Sigmoid colon (tissue), 7 donors: ENCODE measurements at regions of chr17 and their contacts with region 1.

Region 1: GRCh38 chr17:66301797-66302741 is at the start of gene PRKCA:
- DNase-seq: peak; percentile 86
- H3K4me3 ChIP-seq: peak within 1 kb of the TSS; percentile 84 to 98 (median 94)
- H3K27ac ChIP-seq: peak within 1 kb of the TSS; percentile 85 to 95 (median 91)
- H3K4me1 ChIP-seq: peaks cover 0 to 33% (median 21%) of the 10 kb centered on the region in 4 donors
- H3K27me3 ChIP-seq: no peaks in the 10 kb centered on the region
- CTCF ChIP-seq: peak in 1 of 4 experiments; percentile 6
- EP300 ChIP-seq: no peak
- POLR2A ChIP-seq: no peak
- total RNA-seq, gene PRKCA: 42.6 to 58.4 (median 52.0) TPM

Region 2: DNA sequence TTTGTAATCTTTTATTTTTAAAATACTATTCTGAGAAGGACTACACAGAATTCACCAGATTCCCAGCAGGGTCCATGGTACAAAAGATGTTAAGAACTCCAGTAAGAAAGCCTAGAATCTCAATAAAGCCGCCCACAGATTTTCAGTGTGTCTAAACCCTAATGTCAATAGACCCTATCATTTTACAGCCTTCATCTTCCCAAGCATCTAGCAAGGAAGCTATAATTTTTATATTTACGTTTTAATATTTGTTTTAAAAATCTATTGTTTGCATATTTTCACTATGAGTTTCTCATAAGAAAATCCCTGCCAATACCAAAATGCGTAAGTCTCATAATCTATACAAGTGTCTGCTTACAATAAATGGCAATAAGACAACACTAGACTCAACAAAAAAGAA is 258.6 kb before region 1 on chr17:
- intact Hi-C with region 1: no loop called
- DNase-seq: no peak
- H3K4me3 ChIP-seq: no peak overlapping the region
- H3K27ac ChIP-seq: no peak overlapping the region
- H3K4me1 ChIP-seq: no peaks in the 10 kb centered on the region
- H3K27me3 ChIP-seq: no peaks in the 10 kb centered on the region
- CTCF ChIP-seq: no peak
- EP300 ChIP-seq: no peak
- POLR2A ChIP-seq: no peak

Region 3: GRCh38 chr17:66431910-66432683 is 130.0 kb after region 1 on chr17:
- intact Hi-C with region 1: loop called (anchors 5 kb)
- DNase-seq: no peak
- H3K4me3 ChIP-seq: peak overlapping the region in 1 of 4 donors; percentile 8
- H3K27ac ChIP-seq: peak overlapping the region; percentile 59 to 75 (median 72)
- H3K4me1 ChIP-seq: peaks cover 0 to 68% (median 53%) of the 10 kb centered on the region in 4 donors
- H3K27me3 ChIP-seq: no peaks in the 10 kb centered on the region
- CTCF ChIP-seq: no peak
- EP300 ChIP-seq: no peak
- POLR2A ChIP-seq: no peak

Region 4: GRCh38 chr17:66541461-66542128 is 239.5 kb after region 1 on chr17:
- intact Hi-C with region 1: loop called (anchors 5 kb)
- DNase-seq: no peak
- H3K4me3 ChIP-seq: no peak overlapping the region
- H3K27ac ChIP-seq: peak overlapping the region; percentile 75 to 78 (median 76)
- H3K4me1 ChIP-seq: peaks cover 0 to 68% (median 59%) of the 10 kb centered on the region in 4 donors
- H3K27me3 ChIP-seq: no peaks in the 10 kb centered on the region
- CTCF ChIP-seq: no peak
- EP300 ChIP-seq: peak in 1 of 4 donors; percentile 12
- POLR2A ChIP-seq: no peak

Region 5: DNA sequence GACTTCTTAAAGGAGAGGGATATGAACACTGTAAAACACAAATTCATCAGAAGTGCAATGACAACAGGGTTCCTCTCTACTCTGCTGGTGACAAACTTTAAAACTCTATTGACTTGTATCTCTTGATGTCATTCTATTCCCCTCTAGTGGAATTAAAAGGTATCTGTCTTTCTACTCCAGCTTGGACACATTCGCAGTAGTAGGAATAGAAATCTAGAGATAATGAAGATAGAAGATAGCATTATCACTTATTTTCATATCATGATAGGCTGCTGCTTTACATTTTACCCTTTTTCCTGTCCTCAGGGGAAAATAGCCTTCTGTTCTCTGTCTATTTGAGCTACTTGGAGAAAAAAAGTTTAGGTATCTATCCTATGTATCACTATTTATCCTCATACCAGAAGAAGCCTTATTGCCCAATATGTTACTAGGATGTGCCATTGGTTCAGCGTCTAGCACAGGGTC is 323.3 kb after region 1 on chr17:
- intact Hi-C with region 1: loop called (anchors 5 kb)
- DNase-seq: no peak
- H3K4me3 ChIP-seq: no peak overlapping the region
- H3K27ac ChIP-seq: no peak overlapping the region
- H3K4me1 ChIP-seq: peaks cover 0 to 57% (median 46%) of the 10 kb centered on the region in 4 donors
- H3K27me3 ChIP-seq: no peaks in the 10 kb centered on the region
- CTCF ChIP-seq: peak in 2 of 4 experiments; percentile 56 to 61
- EP300 ChIP-seq: no peak
- POLR2A ChIP-seq: no peak